Caco-2 (cell line): ENCODE measurements at regions of chr1 and their contacts with region 1.

Region 1: DNA sequence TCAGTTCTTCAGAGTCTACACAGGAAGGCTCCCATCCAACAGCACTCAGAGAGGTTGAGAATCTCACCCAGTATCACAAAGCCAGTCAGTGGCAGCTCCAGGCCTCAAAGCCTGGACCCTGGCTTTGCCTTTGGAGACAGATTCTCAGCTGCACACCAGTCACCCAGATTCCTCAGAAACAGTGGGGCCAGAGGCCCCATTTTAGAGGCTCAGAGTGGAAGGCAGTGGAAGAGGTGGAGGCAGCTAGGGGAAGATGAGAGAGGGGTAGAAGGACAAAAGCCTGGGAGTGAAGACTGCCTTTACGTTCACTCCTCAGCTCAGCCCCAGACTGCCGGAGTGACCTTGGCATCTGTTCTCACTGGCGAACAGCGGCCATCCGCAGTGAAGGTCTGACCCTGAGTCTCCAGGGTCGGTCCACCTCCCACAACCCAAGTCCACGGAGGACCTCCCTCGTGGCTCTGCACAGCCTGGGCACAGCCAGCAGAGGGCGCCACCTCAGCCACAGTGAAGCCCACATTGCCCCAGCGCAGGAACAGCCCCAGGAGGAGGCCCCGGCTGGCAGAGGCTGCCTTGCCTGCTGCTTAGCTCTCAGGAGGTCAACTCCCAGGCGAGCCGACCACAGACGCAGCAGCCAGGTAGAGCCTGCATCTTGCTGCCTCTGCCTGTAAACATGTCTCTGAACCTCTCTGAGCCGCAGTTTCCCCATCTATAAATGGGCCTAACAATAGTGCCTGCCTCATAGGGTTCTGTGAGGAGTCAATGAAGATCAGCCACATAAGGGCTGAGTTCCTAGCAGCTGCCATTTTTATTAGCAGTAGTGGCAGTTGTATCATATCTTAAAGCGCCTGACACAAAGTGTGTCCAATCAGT is 5.9 kb upstream of the FNDC5 start:
- DNase-seq: peak in 1 of 2 experiments; percentile 57
- H3K4me3 ChIP-seq: no peak overlapping the region
- H3K4me3 Mint-ChIP-seq: no peak overlapping the region
- H3K27ac Mint-ChIP-seq: no peak overlapping the region
- H3K4me1 ChIP-seq: no peaks in the 10 kb centered on the region
- H3K4me1 Mint-ChIP-seq: peaks cover 6% of the 10 kb centered on the region
- H3K27me3 ChIP-seq: no peaks in the 10 kb centered on the region
- H3K27me3 Mint-ChIP-seq: no peaks in the 10 kb centered on the region
- CTCF ChIP-seq: peak; percentile 51 to 76

Region 2: DNA sequence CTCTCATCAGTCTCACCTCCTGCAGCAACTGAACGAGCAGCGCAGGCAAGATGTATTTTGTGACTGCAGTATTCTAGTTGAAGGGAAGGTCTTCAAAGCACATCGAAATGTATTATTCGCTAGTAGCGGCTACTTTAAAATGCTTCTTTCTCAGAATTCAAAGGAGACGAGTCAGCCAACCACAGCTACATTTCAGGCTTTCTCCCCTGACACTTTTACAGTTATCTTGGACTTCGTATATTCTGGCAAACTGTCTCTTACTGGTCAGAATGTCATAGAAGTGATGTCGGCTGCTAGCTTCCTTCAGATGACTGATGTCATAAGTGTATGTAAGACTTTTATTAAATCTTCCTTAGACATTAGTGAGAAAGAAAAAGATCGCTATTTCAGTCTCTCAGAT is 283.6 kb before region 1 on chr1:
- CTCF ChIA-PET with region 1: no interaction called
- POLR2A ChIA-PET with region 1: no interaction called
- intact Hi-C with region 1: no loop called
- DNase-seq: no peak
- H3K4me3 ChIP-seq: no peak overlapping the region
- H3K4me3 Mint-ChIP-seq: no peak overlapping the region
- H3K27ac Mint-ChIP-seq: no peak overlapping the region
- H3K4me1 ChIP-seq: no peaks in the 10 kb centered on the region
- H3K4me1 Mint-ChIP-seq: no peaks in the 10 kb centered on the region
- H3K27me3 ChIP-seq: no peaks in the 10 kb centered on the region
- H3K27me3 Mint-ChIP-seq: no peaks in the 10 kb centered on the region
- CTCF ChIP-seq: no peak

Region 3: GRCh38 chr1:33086384-33086850 is 209.8 kb after region 1 on chr1:
- CTCF ChIA-PET with region 1: interaction called, 3 read pairs
- POLR2A ChIA-PET with region 1: no interaction called
- intact Hi-C with region 1: loop called (anchors 1 kb)
- DNase-seq: peak; percentile 65
- H3K4me3 ChIP-seq: no peak overlapping the region
- H3K4me3 Mint-ChIP-seq: no peak overlapping the region
- H3K27ac Mint-ChIP-seq: no peak overlapping the region
- H3K4me1 ChIP-seq: no peaks in the 10 kb centered on the region
- H3K4me1 Mint-ChIP-seq: peaks cover 6% of the 10 kb centered on the region
- H3K27me3 ChIP-seq: no peaks in the 10 kb centered on the region
- H3K27me3 Mint-ChIP-seq: peaks cover 5% of the 10 kb centered on the region
- CTCF ChIP-seq: peak; percentile 43 to 61